ENCODE measurements at regions of chr11 and their contacts with region 1.

Region 1: DNA sequence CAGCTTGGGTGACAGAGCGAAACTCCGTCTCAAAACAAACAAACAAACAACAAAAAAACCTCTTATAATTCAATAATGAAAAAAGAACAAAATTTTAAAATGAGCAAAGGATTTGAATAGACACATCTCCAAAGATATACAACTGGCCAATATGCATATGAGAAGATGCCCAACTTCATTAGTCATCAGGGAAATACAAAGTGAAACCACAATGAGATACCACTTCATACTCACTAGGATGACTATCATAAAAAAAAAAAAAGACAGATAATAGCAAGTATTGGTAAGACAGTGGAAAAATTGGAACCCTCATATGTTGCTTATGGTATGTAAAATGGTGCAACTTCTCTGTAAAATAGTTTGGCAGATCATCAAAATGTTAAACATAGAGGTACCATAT is 28.7 kb upstream of the BARX2 start:
- H3K4me3 ChIP-seq: no peak overlapping the region
- H3K27ac ChIP-seq: no peak overlapping the region
- H3K4me1 ChIP-seq: no peaks in the 10 kb centered on the region
- CTCF ChIP-seq: no peak

Region 2: DNA sequence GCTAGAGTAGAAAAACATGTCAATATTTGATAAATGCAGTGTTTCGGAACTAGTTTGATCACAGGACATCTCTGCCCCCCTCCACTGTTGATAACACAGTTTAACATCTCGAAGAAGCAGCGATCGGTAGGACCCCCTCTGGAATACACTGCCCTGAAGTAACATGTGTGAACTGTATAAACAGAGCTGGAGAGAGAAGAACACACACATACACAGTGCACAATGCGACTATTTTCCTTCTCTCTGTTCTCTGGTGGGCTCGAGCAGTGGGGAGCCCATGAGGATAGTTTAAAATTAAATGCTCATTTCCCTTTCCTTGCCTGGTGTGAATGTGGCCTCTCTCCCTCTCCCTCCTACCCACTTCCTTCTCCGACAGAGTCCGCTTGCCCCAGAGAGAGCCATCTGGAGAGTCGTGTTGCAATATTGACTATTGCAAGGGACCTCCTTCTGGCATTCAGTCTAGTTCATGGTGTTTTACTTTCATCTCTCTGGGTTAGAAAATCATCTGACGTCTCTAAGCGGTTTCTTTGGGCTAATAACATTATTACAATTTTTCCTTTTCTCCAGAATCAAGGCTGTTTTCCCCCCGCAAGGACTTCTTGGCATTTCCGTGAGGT is 22.9 kb before region 1 on chr11:
- CTCF ChIA-PET with region 1: no interaction called
- POLR2A ChIA-PET with region 1: no interaction called
- H3K4me3 ChIP-seq: no peak overlapping the region
- H3K27ac ChIP-seq: no peak overlapping the region
- H3K4me1 ChIP-seq: no peaks in the 10 kb centered on the region
- CTCF ChIP-seq: no peak

Region 3: DNA sequence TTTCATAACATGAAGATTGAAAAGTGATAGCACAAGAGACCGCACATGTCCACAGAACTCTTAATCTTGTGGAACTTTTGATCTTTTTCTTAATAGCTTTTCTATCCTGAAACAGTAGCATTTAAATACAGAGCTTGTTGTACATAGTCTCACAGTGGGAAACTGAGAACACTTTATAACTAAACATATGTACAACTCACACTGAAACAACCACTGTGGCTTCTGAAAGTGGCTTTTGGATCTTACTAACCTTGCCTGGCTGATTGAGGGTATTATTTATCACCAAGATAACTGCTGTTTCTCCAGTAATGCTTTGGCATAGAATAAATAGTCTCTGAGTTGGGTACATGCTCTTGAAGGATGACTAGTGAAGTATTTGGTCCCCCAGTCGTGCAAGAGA is 38.9 kb after region 1 on chr11:
- CTCF ChIA-PET with region 1: no interaction called
- POLR2A ChIA-PET with region 1: interaction called, 11 read pairs
- H3K4me3 ChIP-seq: no peak overlapping the region
- H3K27ac ChIP-seq: no peak overlapping the region
- H3K4me1 ChIP-seq: peaks cover 20% of the 10 kb centered on the region
- CTCF ChIP-seq: no peak

Region 4: DNA sequence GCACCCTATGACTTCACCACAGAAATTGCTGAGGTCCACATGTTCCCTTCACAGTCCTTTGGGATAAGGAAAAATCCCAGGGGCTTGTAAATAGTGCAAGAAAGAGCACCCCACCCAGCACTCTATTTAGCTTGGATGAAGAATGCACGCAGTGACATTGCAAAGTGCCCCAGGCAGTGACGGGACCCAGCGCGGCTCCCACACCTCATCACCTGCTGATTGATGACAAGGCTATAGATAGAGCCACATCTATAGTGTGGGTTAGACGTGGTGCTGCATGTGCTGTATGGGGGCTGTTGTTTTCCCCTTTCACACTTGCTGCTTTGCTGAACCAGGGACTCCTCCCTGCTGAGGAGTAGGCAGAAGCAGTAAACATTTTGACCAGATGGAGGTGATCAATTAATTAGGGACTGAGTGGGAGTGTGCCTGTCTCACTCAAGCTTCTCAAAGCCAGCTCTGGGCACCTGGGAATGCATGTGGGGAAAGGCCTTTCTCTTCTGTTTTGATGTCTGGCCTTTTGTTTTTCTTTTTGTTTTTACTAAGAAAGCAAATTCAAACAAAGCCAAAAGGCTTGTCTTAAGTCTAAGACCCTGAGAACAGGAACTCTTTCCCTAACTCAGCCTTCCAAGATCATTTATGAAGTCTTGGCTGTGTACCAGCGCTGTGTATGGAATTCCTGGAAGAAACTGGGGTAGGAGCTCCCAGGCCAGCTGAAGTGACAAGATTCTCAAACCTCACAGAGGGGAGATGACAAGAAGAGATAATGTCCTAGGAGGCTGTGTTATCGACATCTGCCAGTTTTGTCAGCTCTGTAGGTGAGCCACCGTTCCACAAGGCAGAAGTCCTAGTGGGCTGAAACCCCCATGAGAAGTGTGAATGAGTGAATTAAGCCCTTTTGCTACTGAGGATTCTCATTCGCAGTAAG is 248.4 kb after region 1 on chr11:
- CTCF ChIA-PET with region 1: no interaction called
- POLR2A ChIA-PET with region 1: no interaction called
- H3K4me3 ChIP-seq: no peak overlapping the region
- H3K27ac ChIP-seq: no peak overlapping the region
- H3K4me1 ChIP-seq: no peaks in the 10 kb centered on the region
- CTCF ChIP-seq: no peak